Gastrocnemius medialis (tissue), 4 donors: ENCODE measurements at regions of chr17 and their contacts with region 1.

Region 1: DNA sequence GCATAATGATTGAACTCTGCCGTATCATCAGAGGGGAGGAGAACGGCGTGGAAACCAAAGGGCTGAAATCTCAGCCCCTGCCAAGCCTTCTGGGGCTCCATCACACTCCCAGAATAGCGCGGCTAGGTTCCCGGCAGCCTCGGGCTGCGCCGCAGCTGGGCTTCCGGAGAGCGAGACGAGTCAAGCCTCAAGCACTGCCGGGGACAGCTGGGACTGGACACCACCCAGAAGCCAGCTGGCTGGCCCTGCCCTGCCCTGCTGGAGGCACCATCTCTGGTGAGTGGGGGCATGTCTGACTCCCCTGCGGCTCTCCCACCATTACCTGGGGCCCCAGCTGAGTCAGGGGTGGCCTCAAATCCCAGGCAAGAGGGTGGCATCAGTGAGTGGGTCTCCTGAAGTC is 7.2 kb upstream of the GPRC5C start:
- DNase-seq: peak; percentile 75 to 93
- ATAC-seq: peak; percentile 79 to 81
- H3K4me3 ChIP-seq: peak overlapping the region in 3 of 4 donors; percentile 5 to 35 (median 31)
- H3K27ac ChIP-seq: peak overlapping the region; percentile 96 to 99 (median 98)
- H3K4me1 ChIP-seq: peaks cover 53 to 55% of the 10 kb centered on the region in 2 donors
- H3K27me3 ChIP-seq: no peaks in the 10 kb centered on the region
- CTCF ChIP-seq: no peak
- POLR2A ChIP-seq: peak in 1 of 2 donors; percentile 73

Region 2: GRCh38 chr17:74394977-74395376 is 29.7 kb before region 1 on chr17:
- in situ Hi-C with region 1: no loop called
- intact Hi-C with region 1: loop called (anchors 1 kb)
- DNase-seq: peak; percentile 78 to 92
- ATAC-seq: peak; percentile 93 to 94
- H3K4me3 ChIP-seq: peak overlapping the region in 2 of 4 donors; percentile 9 to 19
- H3K27ac ChIP-seq: peak overlapping the region; percentile 88 to 95 (median 95)
- H3K4me1 ChIP-seq: peaks cover 40 to 41% of the 10 kb centered on the region in 2 donors
- H3K27me3 ChIP-seq: no peaks in the 10 kb centered on the region
- CTCF ChIP-seq: peak in 2 of 5 experiments; percentile 7 to 23
- POLR2A ChIP-seq: peak; percentile 38 to 48

Region 3: DNA sequence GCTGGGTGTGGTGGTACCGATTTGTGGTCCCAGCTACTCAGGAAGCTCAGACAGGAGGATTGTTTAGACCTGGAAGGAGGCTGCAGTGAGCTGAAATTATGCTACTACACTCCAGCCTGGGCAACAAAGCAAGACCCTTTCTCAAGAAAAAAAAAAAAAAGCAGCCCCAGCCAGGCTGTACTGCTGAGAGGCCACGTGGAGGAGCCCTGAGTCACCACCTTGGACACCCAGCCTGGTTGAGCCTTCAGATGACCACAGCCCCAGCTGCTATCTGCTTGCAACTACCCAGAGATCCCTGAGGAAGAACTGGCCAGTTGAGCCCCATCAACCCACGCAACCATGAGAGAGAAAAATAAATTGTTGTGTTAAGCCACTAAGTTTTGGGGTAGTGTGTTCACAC is 16.4 kb before region 1 on chr17:
- in situ Hi-C with region 1: no loop called
- intact Hi-C with region 1: no loop called
- DNase-seq: peak; percentile 56 to 76
- ATAC-seq: peak; percentile 90 to 91
- H3K4me3 ChIP-seq: no peak overlapping the region
- H3K27ac ChIP-seq: peak overlapping the region in 3 of 4 donors; percentile 15 to 38 (median 19)
- H3K4me1 ChIP-seq: peaks cover 10 to 13% of the 10 kb centered on the region in 2 donors
- H3K27me3 ChIP-seq: no peaks in the 10 kb centered on the region
- CTCF ChIP-seq: peak in 1 of 5 experiments; percentile 10
- POLR2A ChIP-seq: no peak